ENCODE measurements at regions of chr6 and their contacts with region 1.

Region 1: DNA sequence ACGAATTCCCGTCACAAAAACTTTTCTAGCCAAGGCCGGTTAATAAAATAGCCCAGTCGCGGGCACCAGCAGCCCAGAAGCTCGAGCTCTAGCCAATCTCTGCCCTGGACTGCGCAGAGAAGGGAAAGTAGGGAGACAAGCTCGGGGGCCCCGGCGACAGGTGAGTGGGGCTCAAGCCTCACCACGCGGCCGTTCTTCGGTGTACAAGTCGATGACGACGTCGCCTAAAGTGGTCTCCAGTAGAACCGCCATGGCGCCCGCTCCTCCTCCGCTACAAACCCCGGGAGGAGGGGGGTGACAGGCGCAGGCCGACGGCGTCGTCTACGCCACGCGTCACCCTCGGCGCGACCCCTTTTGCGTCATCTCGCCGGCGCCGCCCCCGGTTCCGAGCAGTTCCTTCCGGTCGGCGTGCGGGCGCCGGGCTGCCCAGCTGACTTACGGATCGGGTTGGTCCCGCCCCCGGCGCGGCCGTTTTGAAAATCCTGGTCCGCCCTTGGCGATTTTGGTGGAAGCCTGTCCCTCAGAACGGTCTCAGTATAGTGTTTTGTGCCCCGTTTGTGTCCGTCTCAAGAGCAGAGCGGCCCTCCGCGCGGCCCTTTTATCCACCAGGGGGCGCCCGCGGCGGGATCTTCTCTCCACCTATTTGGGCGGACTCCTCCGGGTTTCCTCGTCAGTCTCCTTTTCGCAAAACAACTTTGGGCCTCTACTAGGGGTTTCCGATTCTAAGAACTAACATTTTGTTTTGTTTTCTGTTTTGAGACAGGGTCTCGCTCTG is at the start of gene PPIL4:
- DNase-seq: peak; percentile 97
- H3K4me3 Mint-ChIP-seq: peak within 1 kb of the TSS; percentile 97
- H3K27ac Mint-ChIP-seq: peak within 1 kb of the TSS; percentile 95
- H3K4me1 Mint-ChIP-seq: peaks cover 39% of the 10 kb centered on the region
- H3K27me3 Mint-ChIP-seq: peaks cover 9% of the 10 kb centered on the region
- total RNA-seq, gene PPIL4: 17.0 to 18.3 TPM

Region 2: GRCh38 chr6:149293244-149293643 is 252.7 kb before region 1 on chr6:
- CTCF ChIA-PET with region 1: no interaction called
- POLR2A ChIA-PET with region 1: no interaction called
- DNase-seq: no peak
- H3K4me3 Mint-ChIP-seq: no peak overlapping the region
- H3K27ac Mint-ChIP-seq: no peak overlapping the region
- H3K4me1 Mint-ChIP-seq: peaks cover 3% of the 10 kb centered on the region
- H3K27me3 Mint-ChIP-seq: peaks cover 4% of the 10 kb centered on the region

Region 3: DNA sequence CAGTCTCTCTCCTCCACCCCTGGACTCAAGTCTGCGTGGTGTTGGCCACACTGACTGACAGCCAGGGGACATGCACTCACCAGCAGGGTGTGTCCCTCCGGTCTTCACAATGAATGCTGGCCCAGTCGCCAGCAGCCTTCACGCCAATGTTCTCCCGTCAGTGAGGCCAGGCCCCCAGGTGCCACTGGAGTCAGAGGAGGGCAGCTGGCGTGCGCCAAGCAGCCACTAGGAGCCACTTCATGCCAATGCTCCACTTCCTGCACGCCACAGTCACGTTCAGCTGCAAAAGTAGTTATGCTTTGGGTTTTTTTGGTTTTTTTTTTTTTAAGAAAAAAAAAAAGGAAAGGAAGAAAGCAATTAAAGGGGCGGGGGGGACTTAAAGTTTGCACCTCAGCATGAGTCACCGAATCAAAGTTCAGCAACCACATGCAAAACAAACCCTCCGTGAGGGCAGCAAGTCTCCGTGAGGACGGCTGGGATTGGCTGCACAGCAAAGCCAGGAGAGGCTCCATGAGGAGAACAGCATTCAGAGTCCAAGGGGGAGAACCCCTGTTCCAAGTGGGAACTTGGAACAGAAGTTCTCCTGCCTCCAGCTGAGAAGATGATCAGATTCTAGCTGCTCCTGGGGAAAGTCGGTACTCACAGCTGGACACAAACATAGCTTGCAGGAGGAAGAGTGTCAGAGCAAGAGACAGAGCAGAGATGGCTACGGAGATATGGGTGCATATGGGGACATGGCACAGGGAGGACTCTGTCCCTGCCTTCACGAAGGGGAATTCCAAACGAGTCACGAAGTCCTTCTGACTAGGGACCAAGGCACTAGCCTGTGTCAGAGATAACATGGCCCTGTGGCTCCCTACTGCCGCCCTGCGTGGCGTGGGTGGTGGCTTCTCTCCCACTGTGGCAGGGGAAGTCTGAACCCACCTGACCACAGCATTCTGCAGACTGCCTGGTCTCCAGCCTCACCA is 60.9 kb before region 1 on chr6 and contains the start of gene ZC3H12D:
- CTCF ChIA-PET with region 1: interaction called, 27 read pairs
- POLR2A ChIA-PET with region 1: interaction called, 6 read pairs
- DNase-seq: peak; percentile 86
- H3K4me3 Mint-ChIP-seq: peak within 1 kb of the TSS; percentile 98
- H3K27ac Mint-ChIP-seq: peak within 1 kb of the TSS; percentile 96
- H3K4me1 Mint-ChIP-seq: peaks cover 41% of the 10 kb centered on the region
- H3K27me3 Mint-ChIP-seq: no peaks in the 10 kb centered on the region
- total RNA-seq, gene ZC3H12D: 37.4 to 37.6 TPM

Region 4: DNA sequence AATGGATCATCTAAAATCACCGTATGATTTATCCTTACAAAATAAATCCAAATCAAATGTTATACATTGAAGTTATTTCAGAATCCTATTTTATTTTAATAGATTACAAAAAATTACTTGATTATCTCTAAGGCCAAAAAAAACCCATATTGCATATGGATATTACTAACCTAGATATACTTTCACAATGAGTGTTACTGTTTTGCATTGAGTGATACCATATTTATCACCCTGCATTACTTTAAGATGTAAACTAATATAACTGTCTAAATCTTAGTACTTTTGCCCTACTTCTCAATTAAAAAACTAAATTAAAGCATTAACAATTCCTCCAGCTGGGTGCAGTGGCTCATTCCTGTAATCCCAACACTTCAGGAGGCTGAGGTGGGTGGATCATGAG is 11.2 kb before region 1 on chr6:
- CTCF ChIA-PET with region 1: interaction called, 7 read pairs
- POLR2A ChIA-PET with region 1: interaction called, 13 read pairs
- DNase-seq: no peak
- H3K4me3 Mint-ChIP-seq: no peak overlapping the region
- H3K27ac Mint-ChIP-seq: no peak overlapping the region
- H3K4me1 Mint-ChIP-seq: no peaks in the 10 kb centered on the region
- H3K27me3 Mint-ChIP-seq: no peaks in the 10 kb centered on the region

Region 5: GRCh38 chr6:149565527-149566409 is 19.8 kb after region 1 on chr6 and contains the start of gene GINM1:
- CTCF ChIA-PET with region 1: interaction called, 55 read pairs
- POLR2A ChIA-PET with region 1: interaction called, 18 read pairs
- DNase-seq: peak; percentile 97
- H3K4me3 Mint-ChIP-seq: peak within 1 kb of the TSS; percentile 87
- H3K27ac Mint-ChIP-seq: peak within 1 kb of the TSS; percentile 85
- H3K4me1 Mint-ChIP-seq: peaks cover 22% of the 10 kb centered on the region
- H3K27me3 Mint-ChIP-seq: peaks cover 6% of the 10 kb centered on the region
- total RNA-seq, gene GINM1: 18.1 to 18.4 TPM

Region 6: DNA sequence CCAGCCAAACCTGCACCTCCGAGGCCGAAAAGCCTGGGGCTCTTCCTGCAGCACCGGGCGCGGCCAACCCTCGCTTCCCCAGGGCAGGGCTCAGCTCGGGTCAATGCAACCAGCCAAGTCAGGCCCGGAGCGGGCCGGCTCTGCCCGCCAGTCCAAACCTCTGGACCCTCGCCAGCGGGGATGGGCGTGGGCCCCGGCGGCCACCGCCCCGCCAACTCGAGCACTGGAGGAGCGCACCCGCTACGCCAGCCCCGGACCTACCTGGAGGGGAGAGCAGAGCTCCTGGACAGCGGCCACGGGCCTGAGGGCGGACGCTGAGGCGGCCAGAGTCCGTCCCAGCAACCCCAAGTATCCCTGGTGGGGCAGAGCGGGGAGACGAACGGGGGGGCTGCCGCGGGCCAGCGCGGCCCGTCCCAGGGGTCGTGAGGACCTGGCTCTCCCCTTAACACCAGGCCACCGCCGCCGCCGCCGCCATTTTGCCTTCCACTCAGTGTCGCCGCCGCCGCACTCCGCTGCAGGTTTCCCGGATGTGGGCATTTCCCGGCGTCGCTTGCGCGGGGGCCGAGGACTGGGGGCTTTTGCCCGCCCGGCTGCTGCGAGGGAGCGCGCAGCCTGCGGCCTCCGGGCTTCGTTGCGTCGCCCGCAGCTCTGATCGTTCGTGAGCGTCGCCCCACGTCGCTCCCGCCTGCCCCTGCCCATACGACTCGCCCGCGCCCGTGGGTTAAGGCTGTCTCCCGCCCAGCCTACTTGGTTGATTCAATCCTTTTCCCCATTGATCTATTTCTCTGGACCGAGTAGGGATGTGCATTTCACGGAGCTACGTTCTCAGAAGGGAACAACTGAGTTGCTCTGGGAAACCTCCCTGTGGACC is 171.9 kb after region 1 on chr6 and contains the start of gene LATS1:
- CTCF ChIA-PET with region 1: interaction called, 4 read pairs
- POLR2A ChIA-PET with region 1: interaction called, 12 read pairs
- DNase-seq: peak; percentile 94
- H3K4me3 Mint-ChIP-seq: peak within 1 kb of the TSS; percentile 94
- H3K27ac Mint-ChIP-seq: peak within 1 kb of the TSS; percentile 89
- H3K4me1 Mint-ChIP-seq: peaks cover 37% of the 10 kb centered on the region
- H3K27me3 Mint-ChIP-seq: no peaks in the 10 kb centered on the region
- total RNA-seq, gene LATS1: 30.8 to 31.0 TPM